Posterior cingulate gyrus (tissue), 11 donors: ENCODE measurements at regions of chr5 and their contacts with region 1.

Region 1: DNA sequence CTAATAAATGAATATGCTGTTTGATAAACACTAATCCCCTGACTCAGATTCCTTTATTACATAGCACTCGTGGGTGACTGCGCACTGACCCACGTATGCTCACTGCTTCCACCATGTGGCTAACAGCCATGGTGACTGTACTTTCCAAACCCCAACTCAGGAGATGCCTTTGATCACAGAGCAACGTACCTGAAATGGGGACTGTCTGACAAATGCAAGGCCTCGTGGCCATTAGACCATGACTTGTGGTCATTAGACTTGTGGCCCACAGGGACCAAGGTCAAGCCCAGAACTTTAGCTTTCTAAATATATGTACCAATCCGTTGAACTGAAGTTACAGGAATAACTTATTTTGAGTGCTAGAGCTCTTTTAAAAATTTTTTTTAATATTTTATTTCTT is 46.6 kb downstream of the CYFIP2 start:
- DNase-seq: peak in 6 of 10 donors; percentile 42 to 90 (median 53)

Region 2: GRCh38 chr5:157148734-157149615 is 163.5 kb before region 1 on chr5:
- intact Hi-C with region 1: loop called (anchors 5 kb)
- DNase-seq: peak in 6 of 10 donors; percentile 36 to 87 (median 66)

Region 3: DNA sequence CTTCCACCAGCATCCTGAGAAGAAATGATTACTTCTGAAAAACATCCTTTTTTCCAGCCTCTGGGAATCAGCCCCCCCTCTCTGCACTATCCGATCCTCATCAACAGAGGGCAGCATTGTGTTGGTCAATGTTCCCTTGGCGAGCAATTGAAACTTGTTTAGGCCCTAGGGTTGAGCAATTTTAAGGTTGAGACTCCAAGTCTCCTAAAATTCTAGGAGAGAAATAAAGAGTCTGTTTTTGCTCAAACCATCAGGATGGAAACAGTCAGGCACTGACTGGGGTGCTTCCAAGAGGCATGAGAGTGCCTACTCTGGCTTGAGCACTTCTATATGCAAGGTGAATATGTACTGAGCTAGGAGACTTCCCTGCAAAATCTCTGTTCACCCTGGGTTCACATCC is 58.9 kb before region 1 on chr5:
- intact Hi-C with region 1: loop called (anchors 1 kb)
- DNase-seq: peak in 7 of 10 donors; percentile 33 to 87 (median 61)

Region 4: GRCh38 chr5:157354800-157355199 is 42.3 kb after region 1 on chr5:
- intact Hi-C with region 1: no loop called
- DNase-seq: no peak

Region 5: GRCh38 chr5:157390551-157391297 is 78.2 kb after region 1 on chr5:
- intact Hi-C with region 1: no loop called
- DNase-seq: no peak